ENCODE measurements at regions of chr2 and their contacts with region 1.

Region 1: DNA sequence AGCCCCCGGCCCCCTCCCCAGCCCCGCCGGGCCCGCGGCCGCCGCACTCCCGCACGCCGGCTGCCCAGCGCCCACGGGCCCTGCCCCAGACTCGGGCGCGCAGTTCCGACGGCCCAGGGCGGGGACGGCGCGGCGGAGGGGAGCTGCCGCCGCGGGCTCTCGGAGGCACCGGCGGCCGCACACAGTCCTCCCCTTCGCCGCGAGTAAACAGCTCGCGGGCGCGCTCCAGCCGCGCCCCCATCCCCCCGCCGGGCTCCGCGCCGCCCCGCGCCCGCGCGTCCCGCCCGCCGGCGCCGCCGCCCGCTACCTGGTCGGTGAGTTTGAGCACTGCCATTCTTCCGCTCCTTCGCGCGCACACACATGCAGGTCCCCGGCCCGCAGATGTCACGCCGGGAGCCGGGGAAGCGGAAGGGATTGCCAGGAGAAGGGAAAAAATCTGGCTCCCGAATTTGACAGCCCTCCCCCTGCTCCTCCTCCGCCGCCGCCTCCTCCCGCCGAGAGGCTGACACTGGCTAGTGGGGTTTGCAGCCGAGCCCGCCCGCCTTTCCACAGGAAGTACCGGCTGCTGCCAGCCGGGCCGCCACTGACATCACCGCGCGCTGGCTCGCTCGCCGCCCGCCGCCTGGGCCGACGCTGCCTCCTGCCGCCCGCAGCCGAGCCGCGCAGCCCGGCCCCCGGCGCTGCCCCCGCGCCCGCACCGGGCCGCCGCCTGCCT is at the start of gene ANKRD44:
- DNase-seq: peak; percentile 91
- H3K4me3 Mint-ChIP-seq: peak within 1 kb of the TSS; percentile 90
- H3K27ac Mint-ChIP-seq: peak within 1 kb of the TSS; percentile 96
- H3K4me1 Mint-ChIP-seq: peaks cover 58% of the 10 kb centered on the region
- H3K27me3 Mint-ChIP-seq: no peaks in the 10 kb centered on the region
- total RNA-seq, gene ANKRD44: 87.8 to 101 TPM

Region 2: GRCh38 chr2:197075759-197076337 is 234.6 kb before region 1 on chr2:
- CTCF ChIA-PET with region 1: no interaction called
- intact Hi-C with region 1: loop called (anchors 1 kb)
- DNase-seq: peak; percentile 35
- H3K4me3 Mint-ChIP-seq: no peak overlapping the region
- H3K27ac Mint-ChIP-seq: no peak overlapping the region
- H3K4me1 Mint-ChIP-seq: peaks cover 44% of the 10 kb centered on the region
- H3K27me3 Mint-ChIP-seq: no peaks in the 10 kb centered on the region

Region 3: DNA sequence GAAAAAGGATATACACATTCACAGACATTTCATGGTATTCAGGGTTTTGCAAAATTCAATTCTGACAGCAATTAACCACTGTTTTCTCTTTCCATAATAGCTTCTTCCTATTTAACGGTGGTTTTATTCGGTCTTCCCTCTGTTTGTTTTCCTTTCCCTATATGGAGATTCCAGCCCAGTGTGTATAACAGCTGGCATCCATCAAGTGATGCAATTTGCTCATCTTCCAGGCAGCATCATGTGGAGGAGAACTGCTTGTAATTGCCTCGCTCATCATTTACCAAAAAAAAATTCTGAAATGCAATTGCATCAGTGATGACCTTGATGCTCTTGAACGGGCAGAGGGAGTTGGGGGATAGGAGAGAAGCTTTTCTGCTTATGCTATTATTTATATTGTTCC is 218.0 kb before region 1 on chr2:
- CTCF ChIA-PET with region 1: no interaction called
- intact Hi-C with region 1: no loop called
- DNase-seq: no peak
- H3K4me3 Mint-ChIP-seq: no peak overlapping the region
- H3K27ac Mint-ChIP-seq: no peak overlapping the region
- H3K4me1 Mint-ChIP-seq: peaks cover 13% of the 10 kb centered on the region
- H3K27me3 Mint-ChIP-seq: no peaks in the 10 kb centered on the region

Region 4: GRCh38 chr2:197198890-197199289 is 111.5 kb before region 1 on chr2:
- CTCF ChIA-PET with region 1: interaction called, 10 read pairs
- intact Hi-C with region 1: loop called (anchors 2 kb)
- DNase-seq: peak; percentile 93
- H3K4me3 Mint-ChIP-seq: peak overlapping the region; percentile 83
- H3K27ac Mint-ChIP-seq: peak overlapping the region; percentile 96
- H3K4me1 Mint-ChIP-seq: peaks cover 86% of the 10 kb centered on the region
- H3K27me3 Mint-ChIP-seq: no peaks in the 10 kb centered on the region

Region 5: GRCh38 chr2:197255543-197255942 is 54.9 kb before region 1 on chr2:
- CTCF ChIA-PET with region 1: interaction called, 11 read pairs
- intact Hi-C with region 1: loop called (anchors 1 kb)
- DNase-seq: peak; percentile 87
- H3K4me3 Mint-ChIP-seq: peak overlapping the region; percentile 75
- H3K27ac Mint-ChIP-seq: peak overlapping the region; percentile 97
- H3K4me1 Mint-ChIP-seq: peaks cover 75% of the 10 kb centered on the region
- H3K27me3 Mint-ChIP-seq: no peaks in the 10 kb centered on the region

Region 6: DNA sequence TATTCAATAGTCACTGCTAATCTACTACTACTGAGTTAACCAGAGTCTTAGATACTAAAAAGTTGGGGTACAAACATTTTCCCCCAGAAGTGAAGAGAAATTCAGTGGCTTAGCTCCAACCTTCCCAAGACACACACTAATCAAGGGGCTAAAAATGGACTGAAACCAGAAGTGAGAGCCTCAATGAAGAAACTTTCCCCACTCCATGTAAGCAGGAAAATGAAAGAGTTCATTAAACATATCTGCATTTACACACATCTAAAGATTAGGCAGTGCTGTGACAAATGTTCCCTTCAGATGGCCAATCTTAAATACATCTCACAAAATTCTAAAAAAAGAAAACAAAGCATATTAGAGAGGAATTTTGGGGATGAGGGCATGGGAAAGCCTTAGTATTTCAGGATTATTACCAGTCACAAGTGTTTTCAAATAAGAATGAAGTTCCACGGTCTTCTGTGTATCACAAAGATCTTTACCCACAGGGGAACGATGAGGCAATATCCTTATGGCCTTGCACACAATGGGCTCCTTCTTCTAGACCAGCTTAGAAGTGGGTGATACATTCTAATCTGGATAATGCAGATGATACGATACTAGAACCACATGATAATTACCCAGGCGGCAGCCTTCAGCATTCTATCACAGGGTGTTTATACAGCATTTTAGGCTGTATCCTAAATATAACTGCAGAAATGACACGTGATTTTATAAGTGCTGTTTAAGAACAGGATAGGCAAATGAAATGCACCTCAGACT is 17.0 kb before region 1 on chr2:
- CTCF ChIA-PET with region 1: interaction called, 20 read pairs
- intact Hi-C with region 1: loop called (anchors 1 kb)
- DNase-seq: peak; percentile 48
- H3K4me3 Mint-ChIP-seq: peak overlapping the region; percentile 57
- H3K27ac Mint-ChIP-seq: peak overlapping the region; percentile 92
- H3K4me1 Mint-ChIP-seq: peaks cover 87% of the 10 kb centered on the region
- H3K27me3 Mint-ChIP-seq: no peaks in the 10 kb centered on the region

Region 7: GRCh38 chr2:197360744-197361156 is 50.3 kb after region 1 on chr2:
- CTCF ChIA-PET with region 1: no interaction called
- intact Hi-C with region 1: no loop called
- DNase-seq: no peak
- H3K4me3 Mint-ChIP-seq: no peak overlapping the region
- H3K27ac Mint-ChIP-seq: no peak overlapping the region
- H3K4me1 Mint-ChIP-seq: peaks cover 28% of the 10 kb centered on the region
- H3K27me3 Mint-ChIP-seq: no peaks in the 10 kb centered on the region

Region 8: GRCh38 chr2:197499594-197500526 is 189.4 kb after region 1 on chr2 and contains the starts of genes HSPD1 and HSPE1:
- CTCF ChIA-PET with region 1: no interaction called
- intact Hi-C with region 1: loop called (anchors 5 kb)
- DNase-seq: peak; percentile 99
- H3K4me3 Mint-ChIP-seq: peak within 1 kb of the TSS; percentile 92
- H3K27ac Mint-ChIP-seq: peak within 1 kb of the TSS; percentile 98
- H3K4me1 Mint-ChIP-seq: peaks cover 51% of the 10 kb centered on the region
- H3K27me3 Mint-ChIP-seq: no peaks in the 10 kb centered on the region
- total RNA-seq, gene HSPD1: 1,191 to 1,210 TPM
- total RNA-seq, gene HSPE1: 294 to 310 TPM

Region 9: DNA sequence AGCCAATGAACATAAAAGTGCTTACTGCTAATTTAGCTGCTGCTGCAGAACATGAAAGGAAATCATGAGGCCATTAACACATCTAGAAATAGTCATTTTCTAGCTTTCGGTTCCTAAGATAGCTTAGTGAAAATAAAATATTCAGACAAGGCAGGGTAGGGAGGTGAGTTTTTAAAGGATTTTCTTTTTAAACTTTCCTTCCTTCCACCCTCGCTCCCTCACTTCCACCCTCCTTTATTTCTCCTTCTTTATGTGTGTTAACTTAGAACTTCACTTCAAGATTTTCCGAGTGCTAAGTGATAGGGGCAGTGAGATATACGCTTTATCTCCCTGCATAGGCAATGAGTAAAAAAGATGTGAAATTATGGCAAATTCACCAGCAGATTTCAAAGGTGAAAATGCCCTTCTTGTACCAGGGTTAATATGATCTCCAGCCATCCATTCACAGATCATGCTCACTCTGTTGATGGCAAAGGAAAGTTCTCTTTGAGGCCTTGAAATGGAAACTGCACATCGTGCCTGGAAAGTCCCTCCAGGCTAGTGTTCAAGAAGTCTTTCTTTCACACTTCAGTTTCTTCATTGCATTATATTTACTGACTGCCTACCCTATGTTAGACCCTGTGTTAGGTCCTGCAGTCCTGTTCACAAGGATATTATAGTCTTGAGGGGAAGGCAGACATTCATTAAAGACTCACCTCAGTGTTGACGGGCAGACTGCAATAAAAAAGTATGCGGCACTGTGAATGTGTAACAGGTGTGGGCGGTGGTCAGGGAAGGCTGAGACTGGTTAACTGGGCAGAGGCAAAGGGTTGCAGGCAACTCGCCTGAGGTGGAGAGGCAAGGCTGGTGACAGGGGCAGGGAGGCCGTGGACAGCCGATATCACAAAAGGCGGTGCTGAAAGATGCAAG is 694.7 kb after region 1 on chr2:
- CTCF ChIA-PET with region 1: no interaction called
- intact Hi-C with region 1: loop called (anchors 10 kb)
- DNase-seq: peak; percentile 74
- H3K4me3 Mint-ChIP-seq: peak overlapping the region; percentile 60
- H3K27ac Mint-ChIP-seq: peak overlapping the region; percentile 89
- H3K4me1 Mint-ChIP-seq: peaks cover 66% of the 10 kb centered on the region
- H3K27me3 Mint-ChIP-seq: no peaks in the 10 kb centered on the region